Calu3 (cell line): ENCODE measurements at regions of chr7 and their contacts with region 1.

Region 1: DNA sequence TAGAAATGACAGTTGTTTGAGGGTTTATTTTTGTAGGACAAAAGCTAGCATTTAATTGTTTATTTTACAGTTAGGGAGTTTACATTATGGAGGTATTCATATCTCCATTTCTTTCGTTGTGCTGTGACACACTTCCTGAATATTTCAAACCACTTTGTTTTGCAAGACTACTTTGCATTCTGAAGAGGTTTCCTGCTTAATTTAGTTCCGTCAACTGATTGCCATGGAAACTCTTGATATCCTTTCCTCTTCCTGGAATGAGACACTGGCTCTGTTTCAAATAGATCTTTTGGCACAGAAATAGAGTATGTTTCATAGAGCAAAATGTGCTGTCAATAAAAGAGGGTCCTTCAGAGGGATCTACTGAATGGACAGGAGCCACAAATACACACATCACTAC is 159.5 kb upstream of the AGR3 start:
- DNase-seq: no peak
- H3K4me3 Mint-ChIP-seq: no peak overlapping the region
- H3K27ac Mint-ChIP-seq: peak overlapping the region; percentile 76
- H3K4me1 Mint-ChIP-seq: peaks cover 80% of the 10 kb centered on the region
- H3K27me3 Mint-ChIP-seq: no peaks in the 10 kb centered on the region
- CTCF ChIP-seq: no peak

Region 2: DNA sequence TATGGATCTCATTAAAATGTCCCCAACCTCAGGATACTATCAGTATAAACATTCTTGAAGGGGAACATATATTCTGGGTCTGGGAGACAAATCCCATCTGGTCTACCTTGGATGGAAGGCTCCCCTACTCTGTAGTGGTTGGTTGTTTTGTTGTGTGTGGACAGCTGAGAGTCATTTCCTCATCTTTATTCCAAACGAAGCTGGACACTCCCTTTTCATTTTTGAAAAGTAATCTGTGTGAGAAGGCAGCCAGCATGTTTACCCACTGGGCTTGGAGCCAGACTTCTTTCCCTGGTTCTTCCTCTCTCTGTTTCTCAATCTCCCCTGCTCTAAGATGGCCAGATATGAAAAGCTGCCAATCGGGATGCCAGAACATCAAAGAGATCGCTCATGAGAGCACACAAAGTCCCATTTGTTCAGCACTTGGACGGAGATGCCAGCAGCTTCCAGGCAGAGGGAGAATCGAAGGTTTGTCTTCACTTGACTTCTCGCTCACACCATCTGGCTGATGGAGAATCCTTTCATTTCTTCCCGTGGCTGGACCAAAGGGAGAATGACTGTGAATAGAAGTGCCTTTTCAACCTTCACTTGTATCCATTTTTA is 51.4 kb before region 1 on chr7:
- CTCF ChIA-PET with region 1: no interaction called
- intact Hi-C with region 1: loop called (anchors 2 kb)
- DNase-seq: peak; percentile 95
- H3K4me3 Mint-ChIP-seq: peak overlapping the region; percentile 51
- H3K27ac Mint-ChIP-seq: peak overlapping the region; percentile 100
- H3K4me1 Mint-ChIP-seq: peaks cover 73% of the 10 kb centered on the region
- H3K27me3 Mint-ChIP-seq: no peaks in the 10 kb centered on the region
- CTCF ChIP-seq: no peak

Region 3: DNA sequence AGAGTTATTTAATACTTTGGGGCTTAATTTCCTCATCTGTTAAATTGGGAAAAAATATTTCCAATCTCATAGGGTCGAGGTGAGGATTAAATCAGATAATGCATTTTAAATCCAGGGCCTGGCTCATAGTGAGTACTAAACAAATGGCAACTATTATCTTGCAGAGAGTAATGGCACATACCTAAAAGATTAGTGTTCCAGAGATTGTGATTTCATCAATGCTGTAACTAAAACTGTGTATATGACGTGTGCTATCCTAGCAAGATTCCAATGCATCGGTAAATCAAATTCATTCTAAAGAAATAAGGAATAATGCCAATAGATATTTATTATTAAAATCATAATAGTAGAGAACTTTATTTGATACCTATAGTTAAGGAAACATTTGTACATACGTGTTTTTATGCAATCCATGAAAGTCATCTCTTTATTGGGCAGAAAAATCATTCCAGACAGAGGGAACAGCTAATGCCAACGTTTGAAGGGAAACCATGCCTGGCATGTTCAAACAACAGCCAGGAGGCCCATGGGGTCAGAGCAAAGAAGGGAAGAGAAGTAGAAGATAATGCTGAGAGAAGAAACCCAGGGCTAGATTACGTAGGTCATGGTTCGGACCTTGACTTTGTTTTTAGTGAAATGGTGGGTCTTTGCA is 15.3 kb after region 1 on chr7:
- CTCF ChIA-PET with region 1: no interaction called
- intact Hi-C with region 1: loop called (anchors 1 kb)
- DNase-seq: no peak
- H3K4me3 Mint-ChIP-seq: no peak overlapping the region
- H3K27ac Mint-ChIP-seq: no peak overlapping the region
- H3K4me1 Mint-ChIP-seq: peaks cover 14% of the 10 kb centered on the region
- H3K27me3 Mint-ChIP-seq: no peaks in the 10 kb centered on the region
- CTCF ChIP-seq: no peak

Region 4: DNA sequence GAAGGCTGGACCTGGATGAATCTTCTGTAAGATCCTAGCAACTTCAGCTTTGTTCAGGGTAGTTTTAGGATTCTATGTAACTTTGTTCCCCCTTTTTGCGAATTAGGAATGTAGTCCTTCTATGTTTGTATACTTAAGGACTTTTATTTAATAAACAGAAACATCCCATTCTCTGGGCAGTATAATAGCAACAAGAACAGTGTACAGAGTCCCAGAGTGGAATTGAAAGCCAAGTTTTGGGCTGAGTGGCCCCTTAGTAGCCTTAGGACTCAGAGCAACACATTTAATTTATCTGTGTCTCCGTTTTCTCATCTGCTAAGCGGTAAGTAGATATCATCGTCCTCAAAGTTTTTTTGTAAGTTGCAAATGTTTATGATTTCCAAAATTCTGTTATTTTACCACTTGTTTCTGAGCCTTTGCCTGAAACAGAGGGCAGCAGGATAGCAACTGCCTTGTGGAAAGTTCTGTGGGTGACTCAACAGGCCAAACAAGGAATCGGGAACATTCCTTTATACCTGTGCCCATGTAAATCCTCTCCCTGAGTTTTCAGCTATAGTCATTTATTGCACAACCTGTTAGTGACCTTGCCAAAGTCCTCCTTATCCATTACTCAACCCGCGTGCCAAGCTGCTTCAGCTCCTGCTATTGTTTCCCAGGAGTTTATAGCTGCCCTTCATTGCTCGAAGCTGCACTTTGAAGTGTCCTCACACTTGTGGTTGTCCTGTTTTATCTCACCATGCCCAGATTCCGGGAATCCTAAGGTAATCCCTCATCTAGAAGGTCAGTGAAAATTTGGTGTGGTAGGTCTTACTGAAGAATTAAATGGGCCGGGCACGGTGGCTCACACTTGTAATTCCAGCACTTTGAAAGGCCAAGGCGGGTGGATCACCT is 58.0 kb after region 1 on chr7:
- CTCF ChIA-PET with region 1: interaction called, 3 read pairs
- intact Hi-C with region 1: loop called (anchors 2 kb)
- DNase-seq: peak; percentile 78
- H3K4me3 Mint-ChIP-seq: peak overlapping the region; percentile 42
- H3K27ac Mint-ChIP-seq: peak overlapping the region; percentile 92
- H3K4me1 Mint-ChIP-seq: peaks cover 70% of the 10 kb centered on the region
- H3K27me3 Mint-ChIP-seq: no peaks in the 10 kb centered on the region
- CTCF ChIP-seq: no peak

Region 5: DNA sequence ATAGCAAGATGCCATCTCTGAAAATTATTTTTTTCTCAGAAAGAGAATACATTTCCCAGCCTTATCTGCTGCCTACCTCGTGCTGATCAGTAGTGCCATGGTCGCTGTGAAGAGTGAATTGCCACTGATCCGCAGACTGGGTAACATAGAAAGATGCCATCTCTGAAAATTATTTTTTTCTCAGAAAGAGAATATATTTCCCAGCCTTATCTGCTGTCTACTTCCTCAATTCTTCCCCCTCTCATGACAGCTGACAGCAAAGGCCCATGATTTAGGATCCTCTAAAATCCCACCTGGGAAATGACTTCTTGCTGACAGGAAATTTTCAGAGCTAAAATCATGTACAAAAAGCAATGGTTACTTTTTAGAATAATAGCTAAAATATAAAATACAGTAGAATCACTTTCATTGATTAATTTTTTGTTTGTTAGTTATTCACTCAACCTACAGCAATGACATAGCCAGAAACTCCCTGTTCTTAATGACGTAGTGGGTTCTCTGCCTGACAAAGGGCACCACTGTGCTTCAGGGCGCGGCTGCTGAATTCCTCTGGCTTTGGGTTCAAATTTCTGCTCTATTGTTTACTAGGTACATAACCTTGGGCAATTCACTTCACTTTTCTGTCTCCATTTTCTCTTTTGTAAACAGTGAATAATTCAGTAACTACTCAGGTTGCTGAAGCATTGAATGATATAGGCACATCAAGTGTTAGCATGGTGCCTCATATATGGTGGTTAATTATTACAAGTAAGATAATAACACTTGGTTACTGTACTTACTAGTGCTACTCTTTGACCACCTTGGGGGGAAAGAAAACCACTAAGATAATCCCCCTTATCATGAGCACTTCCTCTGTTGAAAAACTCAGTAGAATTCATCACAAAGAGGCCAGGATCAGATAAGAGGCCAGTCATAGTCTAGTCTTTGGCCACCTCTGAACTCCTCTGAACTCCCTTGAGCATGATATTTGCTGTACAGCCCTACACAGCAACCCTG is 164.9 kb after region 1 on chr7:
- CTCF ChIA-PET with region 1: no interaction called
- intact Hi-C with region 1: no loop called
- DNase-seq: peak; percentile 93
- H3K4me3 Mint-ChIP-seq: peak overlapping the region; percentile 13
- H3K27ac Mint-ChIP-seq: peak overlapping the region; percentile 93
- H3K4me1 Mint-ChIP-seq: peaks cover 68% of the 10 kb centered on the region
- H3K27me3 Mint-ChIP-seq: no peaks in the 10 kb centered on the region
- CTCF ChIP-seq: no peak